H1 (cell line): ENCODE measurements at regions of chr15 and their contacts with region 1.

Region 1: GRCh38 chr15:75928680-75929608 is 25.3 kb downstream of the FBXO22 start:
- DNase-seq: peak in 1 of 2 experiments; percentile 60
- H3K4me3 ChIP-seq: no peak overlapping the region
- H3K27ac ChIP-seq: no peak overlapping the region
- H3K4me1 ChIP-seq: peaks cover 0 to 11% (median 3%) of the 10 kb centered on the region in 4 experiments; a peak in 3 of 7 replicates
- H3K27me3 ChIP-seq: no peaks in the 10 kb centered on the region
- CTCF ChIP-seq: peak; percentile 60 to 87 (median 76)
- EP300 ChIP-seq: no peak
- POLR2A ChIP-seq: no peak
- RAD21 ChIP-seq: peak; percentile 68 to 76

Region 2: GRCh38 chr15:75785771-75786574 is 143.0 kb before region 1 on chr15:
- CTCF ChIA-PET with region 1: interaction called, 14 read pairs
- POLR2A ChIA-PET with region 1: no interaction called
- DNase-seq: peak; percentile 59 to 68
- H3K4me3 ChIP-seq: peak overlapping the region in 1 of 4 experiments; percentile 27; a peak in 1 of 8 replicates
- H3K27ac ChIP-seq: no peak overlapping the region
- H3K4me1 ChIP-seq: peaks cover 0 to 2% (median 0%) of the 10 kb centered on the region in 4 experiments; a peak in 1 of 7 replicates
- H3K27me3 ChIP-seq: no peaks in the 10 kb centered on the region
- CTCF ChIP-seq: peak; percentile 46 to 61 (median 50)
- EP300 ChIP-seq: no peak
- POLR2A ChIP-seq: no peak
- RAD21 ChIP-seq: peak; percentile 48 to 67

Region 3: DNA sequence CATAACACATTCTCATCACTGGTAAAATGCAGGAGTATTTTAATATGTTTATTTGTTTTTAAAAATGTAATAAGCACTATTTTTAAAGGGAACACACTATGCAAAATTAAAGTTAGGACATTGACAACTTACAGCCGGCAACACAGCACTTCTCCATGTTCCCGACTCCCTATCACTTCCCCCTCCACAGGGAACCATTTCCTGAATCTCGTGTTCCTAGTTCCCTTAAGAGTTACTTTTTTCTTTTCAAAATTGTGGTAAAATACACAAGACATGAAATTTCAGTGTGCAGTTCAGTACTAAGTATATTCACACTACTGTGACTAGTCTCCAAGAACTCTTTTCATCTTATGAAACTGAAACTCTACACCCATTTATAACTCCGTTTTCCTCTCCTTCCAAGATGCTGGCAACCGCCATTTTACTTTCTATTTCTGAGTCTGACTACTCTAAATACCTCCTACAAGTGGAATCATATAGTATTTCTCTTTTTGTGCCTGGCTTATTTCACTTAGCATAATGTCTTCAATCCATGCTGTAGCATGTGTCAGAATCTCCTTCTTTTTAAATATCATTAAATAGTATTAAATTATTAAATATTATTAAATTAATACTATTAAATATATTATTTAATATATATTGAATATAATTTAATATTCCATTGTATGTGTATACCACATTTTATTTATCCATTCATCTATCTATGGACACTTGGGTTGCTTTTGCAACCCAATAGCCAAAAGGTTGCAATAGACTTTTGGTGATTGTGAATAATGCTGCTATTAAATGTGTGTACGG is 111.6 kb before region 1 on chr15:
- CTCF ChIA-PET with region 1: interaction called, 110 read pairs
- POLR2A ChIA-PET with region 1: interaction called, 3 read pairs
- DNase-seq: no peak
- H3K4me3 ChIP-seq: no peak overlapping the region
- H3K27ac ChIP-seq: no peak overlapping the region
- H3K4me1 ChIP-seq: no peaks in the 10 kb centered on the region
- H3K27me3 ChIP-seq: no peaks in the 10 kb centered on the region
- CTCF ChIP-seq: no peak
- EP300 ChIP-seq: no peak
- POLR2A ChIP-seq: no peak
- RAD21 ChIP-seq: no peak

Region 4: GRCh38 chr15:75849167-75849566 is 79.8 kb before region 1 on chr15:
- CTCF ChIA-PET with region 1: interaction called, 13 read pairs
- POLR2A ChIA-PET with region 1: interaction called, 5 read pairs
- DNase-seq: no peak
- H3K4me3 ChIP-seq: no peak overlapping the region
- H3K27ac ChIP-seq: no peak overlapping the region
- H3K4me1 ChIP-seq: peaks cover 0 to 12% (median 6%) of the 10 kb centered on the region in 4 experiments
- H3K27me3 ChIP-seq: no peaks in the 10 kb centered on the region
- CTCF ChIP-seq: no peak
- EP300 ChIP-seq: no peak
- POLR2A ChIP-seq: no peak
- RAD21 ChIP-seq: no peak

Region 5: DNA sequence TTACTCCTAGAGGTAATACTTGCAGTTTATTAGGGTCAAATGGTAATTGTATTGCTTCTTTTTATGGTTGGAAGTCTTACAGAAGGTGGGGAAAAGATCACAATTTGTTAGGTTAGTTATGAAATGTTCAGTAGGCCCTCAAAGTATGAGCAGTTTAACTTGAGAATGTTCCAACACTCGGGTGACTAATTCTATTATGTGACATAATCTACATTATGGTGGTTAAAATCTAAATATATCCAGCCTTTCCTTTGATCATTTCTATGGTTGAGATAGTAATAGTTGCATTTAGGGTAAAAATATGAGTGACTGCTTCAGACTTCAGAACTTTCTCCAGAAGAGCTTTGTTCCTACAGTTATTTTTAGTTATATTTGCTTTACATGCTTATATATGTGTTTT is 44.9 kb before region 1 on chr15:
- CTCF ChIA-PET with region 1: interaction called, 12 read pairs
- POLR2A ChIA-PET with region 1: no interaction called
- DNase-seq: no peak
- H3K4me3 ChIP-seq: no peak overlapping the region
- H3K27ac ChIP-seq: no peak overlapping the region
- H3K4me1 ChIP-seq: no peaks in the 10 kb centered on the region
- H3K27me3 ChIP-seq: no peaks in the 10 kb centered on the region
- CTCF ChIP-seq: no peak
- EP300 ChIP-seq: no peak
- POLR2A ChIP-seq: no peak
- RAD21 ChIP-seq: no peak

Region 6: DNA sequence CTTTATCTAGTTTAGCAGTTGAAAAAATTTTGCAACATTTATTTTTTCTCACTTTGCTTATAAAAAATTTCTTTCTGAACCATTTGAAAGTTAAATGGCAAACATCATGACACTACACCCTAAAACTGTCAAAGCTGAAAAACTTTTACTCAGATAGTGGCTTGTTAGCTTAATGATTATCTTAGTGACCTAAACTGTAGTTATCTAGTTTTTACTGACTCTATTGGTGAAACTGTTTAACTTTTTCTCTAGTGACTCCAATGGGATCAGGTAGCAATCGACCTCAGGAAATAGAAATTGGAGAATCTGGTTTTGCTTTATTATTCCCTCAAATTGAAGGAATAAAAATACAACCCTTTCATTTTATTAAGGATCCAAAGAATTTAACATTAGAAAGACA is 12.0 kb before region 1 on chr15:
- CTCF ChIA-PET with region 1: interaction called, 10 read pairs
- POLR2A ChIA-PET with region 1: interaction called, 4 read pairs
- DNase-seq: no peak
- H3K4me3 ChIP-seq: no peak overlapping the region
- H3K27ac ChIP-seq: no peak overlapping the region
- H3K4me1 ChIP-seq: no peaks in the 10 kb centered on the region
- H3K27me3 ChIP-seq: no peaks in the 10 kb centered on the region
- CTCF ChIP-seq: no peak
- EP300 ChIP-seq: no peak
- POLR2A ChIP-seq: no peak
- RAD21 ChIP-seq: no peak